ENCODE measurements at regions of chr4 and their contacts with region 1.

Region 1: GRCh38 chr4:40719008-40719623 is 30.6 kb upstream of the NSUN7 start:
- DNase-seq: peak; percentile 61
- ATAC-seq: peak; percentile 98
- H3K4me3 ChIP-seq: no peak overlapping the region
- H3K27ac ChIP-seq: no peak overlapping the region
- H3K4me1 ChIP-seq: peaks cover 0 to 20% of the 10 kb centered on the region in 2 experiments; a peak in 3 of 4 replicates
- H3K27me3 ChIP-seq: no peaks in the 10 kb centered on the region
- CTCF ChIP-seq: peak; percentile 59 to 72 (median 61); a peak in 4 of 6 replicates
- POLR2A ChIP-seq: no peak
- RAD21 ChIP-seq: peak; percentile 94

Region 2: GRCh38 chr4:40149960-40150385 is 569.1 kb before region 1 on chr4:
- CTCF ChIA-PET with region 1: no interaction called
- POLR2A ChIA-PET with region 1: no interaction called
- RAD21 ChIA-PET with region 1: no interaction called
- intact Hi-C with region 1: loop called (anchors 10 kb)
- DNase-seq: peak; percentile 71
- ATAC-seq: peak; percentile 80
- H3K4me3 ChIP-seq: no peak overlapping the region
- H3K27ac ChIP-seq: no peak overlapping the region
- H3K4me1 ChIP-seq: no peaks in the 10 kb centered on the region
- H3K27me3 ChIP-seq: no peaks in the 10 kb centered on the region
- CTCF ChIP-seq: peak; percentile 71 to 83 (median 79)
- POLR2A ChIP-seq: no peak
- RAD21 ChIP-seq: peak; percentile 86

Region 3: DNA sequence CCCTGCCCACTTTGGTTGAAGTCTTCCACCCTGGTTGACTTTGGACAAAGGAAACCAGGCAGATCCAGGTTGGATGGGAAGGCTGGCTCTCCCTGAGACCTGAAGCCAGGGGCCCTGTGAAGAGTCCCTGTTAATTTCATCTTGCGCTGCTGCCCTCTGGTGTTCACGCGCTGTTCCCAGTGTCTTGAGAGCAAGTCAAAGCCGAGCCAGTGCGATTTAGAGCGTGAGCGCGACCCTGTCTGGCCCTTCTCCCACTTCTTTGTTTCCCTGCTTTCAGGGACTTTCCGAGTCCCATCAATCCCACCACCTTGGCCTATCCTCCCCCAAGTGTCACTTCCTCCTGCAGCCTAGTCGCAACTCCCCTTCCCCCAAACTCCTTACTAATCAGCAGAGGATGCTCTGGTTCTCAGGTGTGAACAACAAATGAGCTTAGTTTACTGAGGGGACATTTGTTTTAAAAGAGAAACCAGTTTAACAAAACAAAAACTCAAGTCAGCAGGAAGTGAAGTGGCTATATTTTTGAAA is 409.8 kb before region 1 on chr4:
- CTCF ChIA-PET with region 1: no interaction called
- POLR2A ChIA-PET with region 1: no interaction called
- RAD21 ChIA-PET with region 1: no interaction called
- intact Hi-C with region 1: loop called (anchors 2 kb)
- DNase-seq: peak; percentile 77
- ATAC-seq: peak; percentile 99
- H3K4me3 ChIP-seq: peak overlapping the region; percentile 11 to 37; a peak in 2 of 4 replicates
- H3K27ac ChIP-seq: no peak overlapping the region
- H3K4me1 ChIP-seq: peaks cover 0 to 8% of the 10 kb centered on the region in 2 experiments; a peak in 2 of 4 replicates
- H3K27me3 ChIP-seq: no peaks in the 10 kb centered on the region
- CTCF ChIP-seq: peak; percentile 87 to 91 (median 88)
- POLR2A ChIP-seq: no peak
- RAD21 ChIP-seq: peak; percentile 92

Region 4: GRCh38 chr4:40325189-40326019 is 393.7 kb before region 1 on chr4:
- CTCF ChIA-PET with region 1: interaction called, 15 read pairs
- POLR2A ChIA-PET with region 1: no interaction called
- RAD21 ChIA-PET with region 1: no interaction called
- intact Hi-C with region 1: loop called (anchors 1 kb)
- DNase-seq: peak; percentile 58
- ATAC-seq: peak; percentile 97
- H3K4me3 ChIP-seq: no peak overlapping the region
- H3K27ac ChIP-seq: no peak overlapping the region
- H3K4me1 ChIP-seq: peaks cover 0 to 3% of the 10 kb centered on the region in 2 experiments; a peak in 1 of 4 replicates
- H3K27me3 ChIP-seq: no peaks in the 10 kb centered on the region
- CTCF ChIP-seq: peak; percentile 79 to 91 (median 90)
- POLR2A ChIP-seq: no peak
- RAD21 ChIP-seq: peak; percentile 84

Region 5: DNA sequence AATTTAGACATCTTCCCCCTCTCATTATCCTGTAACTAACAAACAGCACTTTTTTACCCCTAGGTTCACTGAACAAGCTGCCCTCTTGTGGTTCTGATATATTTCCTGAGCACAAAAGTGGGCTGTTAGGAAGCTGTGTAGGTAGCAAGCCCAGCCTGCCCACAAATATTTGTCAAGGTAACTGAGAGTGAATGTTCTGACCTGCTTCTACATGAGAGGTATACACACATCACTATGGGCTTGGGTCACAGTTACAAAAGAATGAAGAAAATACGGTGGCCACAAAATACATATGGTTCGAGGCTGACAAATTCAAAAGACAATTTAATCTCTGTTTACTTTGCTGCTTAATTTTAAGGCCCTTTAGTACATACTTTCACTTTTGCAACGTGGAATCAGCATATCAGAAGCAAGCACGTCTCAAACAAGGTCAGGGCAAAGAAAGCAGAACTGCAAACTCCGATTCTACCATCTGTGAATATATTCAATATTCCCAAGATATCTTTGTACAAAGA is 168.1 kb before region 1 on chr4:
- CTCF ChIA-PET with region 1: interaction called, 4 read pairs
- POLR2A ChIA-PET with region 1: no interaction called
- RAD21 ChIA-PET with region 1: no interaction called
- intact Hi-C with region 1: loop called (anchors 5 kb)
- DNase-seq: peak; percentile 38
- ATAC-seq: peak; percentile 72
- H3K4me3 ChIP-seq: peak overlapping the region; percentile 29 to 44
- H3K27ac ChIP-seq: peak overlapping the region; percentile 30; the same call in 1 of the 2 replicates
- H3K4me1 ChIP-seq: peaks cover 16 to 51% of the 10 kb centered on the region in 2 experiments; a peak in 3 of 4 replicates
- H3K27me3 ChIP-seq: no peaks in the 10 kb centered on the region
- CTCF ChIP-seq: peak; percentile 36 to 55 (median 44); a peak in 4 of 6 replicates
- POLR2A ChIP-seq: no peak
- RAD21 ChIP-seq: peak; percentile 62